ENCODE measurements at regions of chr17 and their contacts with region 1.

Region 1: GRCh38 chr17:47970704-47971463 is at the start of gene CDK5RAP3:
- DNase-seq: peak; percentile 100
- H3K4me3 Mint-ChIP-seq: peak within 1 kb of the TSS; percentile 91
- H3K27ac Mint-ChIP-seq: peak within 1 kb of the TSS; percentile 64
- H3K4me1 Mint-ChIP-seq: peaks cover 28% of the 10 kb centered on the region
- H3K27me3 Mint-ChIP-seq: no peaks in the 10 kb centered on the region
- total RNA-seq, gene CDK5RAP3: 194 to 205 TPM

Region 2: GRCh38 chr17:47831003-47831933 is 139.6 kb before region 1 on chr17 and contains the starts of genes LRRC46 and MRPL10:
- CTCF ChIA-PET with region 1: interaction called, 7 read pairs
- POLR2A ChIA-PET with region 1: interaction called, 14 read pairs
- DNase-seq: peak; percentile 94
- H3K4me3 Mint-ChIP-seq: peak within 1 kb of the TSS; percentile 90
- H3K27ac Mint-ChIP-seq: peak within 1 kb of the TSS; percentile 100
- H3K4me1 Mint-ChIP-seq: peaks cover 69% of the 10 kb centered on the region
- H3K27me3 Mint-ChIP-seq: no peaks in the 10 kb centered on the region
- total RNA-seq, gene LRRC46: 0.45 to 0.53 TPM
- total RNA-seq, gene MRPL10: 91.5 to 95.7 TPM

Region 3: DNA sequence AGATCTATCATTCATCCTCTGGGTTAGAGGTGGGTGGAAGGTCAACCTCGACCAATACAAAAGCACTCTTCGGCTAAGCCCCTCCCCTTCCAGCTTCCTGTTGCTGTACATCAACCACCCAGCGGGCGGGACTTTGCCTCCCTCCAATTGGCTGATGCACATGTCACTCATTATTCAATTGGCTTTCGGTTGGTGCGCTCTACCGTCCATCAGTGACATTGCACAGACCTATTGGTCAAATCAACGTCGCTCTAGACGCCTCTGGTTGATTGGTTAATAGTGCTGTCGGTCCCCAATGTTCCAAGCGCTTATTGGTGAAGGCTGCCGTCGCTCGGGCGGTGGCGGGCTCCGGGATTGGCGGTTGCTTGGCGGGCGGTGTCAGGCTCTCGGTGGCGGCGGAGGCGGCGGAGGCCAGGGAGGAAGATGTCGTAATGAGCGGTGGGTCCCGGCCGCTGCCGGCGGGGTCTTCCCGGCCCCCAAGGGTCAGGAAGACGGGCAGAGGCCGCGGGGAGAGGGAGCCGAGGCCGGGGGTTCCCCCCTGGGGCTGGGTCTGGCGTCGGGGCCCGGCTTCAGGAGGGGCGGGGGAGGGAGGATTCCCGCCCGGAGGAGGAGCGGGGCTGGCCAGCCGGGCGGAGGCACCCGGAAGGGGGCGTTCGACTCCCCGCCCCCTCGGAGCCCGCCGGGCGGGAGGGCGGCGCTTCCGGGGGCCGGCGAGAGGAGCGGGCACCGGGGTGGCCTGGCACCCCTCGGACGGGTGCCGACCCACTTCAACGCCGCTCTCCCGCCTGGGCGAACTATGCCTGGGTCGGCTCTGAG is 74.8 kb before region 1 on chr17 and contains the start of gene SP2:
- CTCF ChIA-PET with region 1: interaction called, 27 read pairs
- POLR2A ChIA-PET with region 1: interaction called, 26 read pairs
- DNase-seq: peak; percentile 100
- H3K4me3 Mint-ChIP-seq: peak within 1 kb of the TSS; percentile 91
- H3K27ac Mint-ChIP-seq: peak within 1 kb of the TSS; percentile 95
- H3K4me1 Mint-ChIP-seq: peaks cover 48% of the 10 kb centered on the region
- H3K27me3 Mint-ChIP-seq: no peaks in the 10 kb centered on the region
- total RNA-seq, gene SP2: 24.6 to 25.6 TPM

Region 4: DNA sequence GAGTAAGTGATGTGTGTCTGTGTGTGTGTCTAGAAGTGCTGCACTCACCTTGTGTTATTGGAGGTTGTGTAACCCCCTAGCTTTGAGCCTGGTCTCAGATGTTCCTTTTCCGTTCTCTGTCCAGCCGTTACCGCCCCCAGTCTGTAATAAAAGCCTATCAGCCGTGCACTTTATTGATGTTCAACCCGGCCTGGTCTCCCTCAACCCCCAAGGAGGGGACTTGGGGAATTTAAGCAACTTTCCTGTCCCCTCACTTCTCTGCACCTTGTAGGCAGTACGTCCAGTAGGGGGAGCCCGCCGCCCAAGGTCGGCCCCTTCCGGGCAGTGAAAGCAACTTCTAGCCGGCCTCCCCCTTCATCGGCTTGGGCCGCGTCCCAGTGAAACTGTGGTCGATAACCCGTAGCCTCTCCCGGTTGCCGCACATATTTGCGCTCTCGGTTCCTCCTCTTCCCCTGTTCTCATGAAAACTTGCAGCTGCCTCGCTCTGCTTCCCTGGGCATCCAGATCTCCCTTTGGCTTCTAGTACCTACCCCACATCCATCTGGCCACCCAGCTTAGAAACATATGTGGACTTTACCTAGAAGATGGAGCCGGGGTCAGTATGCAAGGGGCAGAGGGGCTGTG is 21.6 kb before region 1 on chr17:
- CTCF ChIA-PET with region 1: interaction called, 229 read pairs
- POLR2A ChIA-PET with region 1: interaction called, 19 read pairs
- DNase-seq: peak; percentile 84
- H3K4me3 Mint-ChIP-seq: peak overlapping the region; percentile 43
- H3K27ac Mint-ChIP-seq: peak overlapping the region; percentile 68
- H3K4me1 Mint-ChIP-seq: peaks cover 41% of the 10 kb centered on the region
- H3K27me3 Mint-ChIP-seq: no peaks in the 10 kb centered on the region

Region 5: DNA sequence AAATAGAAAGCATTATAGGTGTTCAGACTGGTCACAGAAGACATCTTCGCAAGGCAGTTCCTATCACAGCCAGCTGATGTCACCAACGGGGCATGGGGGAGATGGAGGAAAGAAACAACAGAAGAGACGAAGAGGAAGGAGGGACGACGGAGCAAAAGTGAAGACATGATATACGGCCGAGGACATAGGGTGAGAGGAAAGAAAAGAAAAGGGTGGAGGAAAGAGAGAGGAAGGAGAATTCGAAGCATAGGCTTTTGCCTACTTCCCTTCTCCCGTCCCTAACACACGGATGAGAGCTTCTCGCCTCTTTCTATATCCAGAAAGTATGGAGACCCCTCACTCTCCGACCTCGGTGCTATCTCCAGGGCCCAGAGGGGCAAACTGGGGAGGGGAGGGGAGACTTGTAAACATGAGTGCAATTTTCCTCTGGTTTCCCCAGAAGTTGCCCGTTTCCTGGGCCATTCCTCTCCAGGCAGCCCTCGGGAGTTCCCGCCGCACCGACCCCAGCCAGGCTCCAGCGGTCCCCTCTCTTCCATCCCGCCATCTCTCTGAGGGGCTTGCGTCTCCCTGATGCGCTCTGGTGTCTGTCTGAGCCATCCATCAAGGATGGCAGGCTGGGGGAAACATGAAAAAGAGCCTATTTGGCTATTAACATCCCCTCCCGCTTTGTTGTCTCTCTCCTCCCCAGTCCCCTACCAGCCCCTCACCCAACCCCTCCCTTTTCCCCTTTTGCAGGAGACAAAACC is 40.7 kb after region 1 on chr17:
- CTCF ChIA-PET with region 1: interaction called, 185 read pairs
- POLR2A ChIA-PET with region 1: interaction called, 22 read pairs
- DNase-seq: peak; percentile 68
- H3K4me3 Mint-ChIP-seq: peak overlapping the region; percentile 73
- H3K27ac Mint-ChIP-seq: no peak overlapping the region
- H3K4me1 Mint-ChIP-seq: peaks cover 23% of the 10 kb centered on the region
- H3K27me3 Mint-ChIP-seq: peaks cover 49% of the 10 kb centered on the region